Psoas muscle (tissue), 8 donors: ENCODE measurements at regions of chr20 and their contacts with region 1.

Region 1: DNA sequence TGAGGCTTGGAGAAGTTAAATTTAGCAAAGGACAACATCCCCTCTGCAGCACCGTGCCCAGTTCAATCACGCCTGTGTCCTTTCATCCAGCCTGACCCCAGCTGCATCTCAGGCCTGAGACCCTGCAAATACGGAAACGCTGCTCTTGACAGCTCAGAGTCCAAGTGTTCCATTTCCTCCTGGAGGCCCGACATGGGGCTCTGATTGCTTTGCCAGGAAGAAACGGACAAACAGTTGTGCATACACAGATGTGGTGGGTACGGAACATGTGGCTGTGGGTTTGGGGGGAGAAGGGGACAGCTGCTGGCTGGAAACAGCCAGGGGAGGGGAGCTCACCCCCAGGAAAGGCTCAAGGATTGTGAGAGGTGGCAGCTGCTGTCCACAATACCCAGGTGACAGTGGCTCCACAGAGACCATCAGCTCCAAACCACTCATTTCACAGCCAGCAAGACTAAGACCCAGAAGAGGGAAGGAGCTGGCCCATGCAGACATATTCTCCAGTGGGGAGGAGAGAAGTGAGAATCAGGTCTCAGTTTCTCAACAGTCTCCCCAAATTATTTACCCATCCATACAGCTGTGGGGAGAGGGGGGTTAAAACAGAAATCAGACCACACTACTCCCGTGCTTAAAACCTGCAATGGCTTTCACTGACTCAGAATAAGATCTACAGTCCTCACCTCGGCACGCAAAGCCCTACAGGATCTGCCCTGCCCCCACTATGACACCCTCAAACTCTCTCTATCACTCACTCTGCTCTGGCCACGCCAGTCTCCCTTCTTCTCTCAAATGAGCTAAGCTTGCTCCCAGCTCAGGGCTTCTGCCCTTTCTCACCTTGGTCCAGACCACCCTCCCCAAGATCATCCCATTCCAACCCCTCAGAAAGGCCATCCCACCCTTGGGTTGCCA is 89.1 kb downstream of the PREX1 start:
- DNase-seq: no peak
- ATAC-seq: no peak
- H3K4me3 ChIP-seq: no peak overlapping the region
- H3K27ac ChIP-seq: no peak overlapping the region
- H3K4me1 ChIP-seq: peaks cover 8% of the 10 kb centered on the region
- H3K27me3 ChIP-seq: peaks cover 0 to 1% (median 0%) of the 10 kb centered on the region in 3 donors
- CTCF ChIP-seq: no peak

Region 2: DNA sequence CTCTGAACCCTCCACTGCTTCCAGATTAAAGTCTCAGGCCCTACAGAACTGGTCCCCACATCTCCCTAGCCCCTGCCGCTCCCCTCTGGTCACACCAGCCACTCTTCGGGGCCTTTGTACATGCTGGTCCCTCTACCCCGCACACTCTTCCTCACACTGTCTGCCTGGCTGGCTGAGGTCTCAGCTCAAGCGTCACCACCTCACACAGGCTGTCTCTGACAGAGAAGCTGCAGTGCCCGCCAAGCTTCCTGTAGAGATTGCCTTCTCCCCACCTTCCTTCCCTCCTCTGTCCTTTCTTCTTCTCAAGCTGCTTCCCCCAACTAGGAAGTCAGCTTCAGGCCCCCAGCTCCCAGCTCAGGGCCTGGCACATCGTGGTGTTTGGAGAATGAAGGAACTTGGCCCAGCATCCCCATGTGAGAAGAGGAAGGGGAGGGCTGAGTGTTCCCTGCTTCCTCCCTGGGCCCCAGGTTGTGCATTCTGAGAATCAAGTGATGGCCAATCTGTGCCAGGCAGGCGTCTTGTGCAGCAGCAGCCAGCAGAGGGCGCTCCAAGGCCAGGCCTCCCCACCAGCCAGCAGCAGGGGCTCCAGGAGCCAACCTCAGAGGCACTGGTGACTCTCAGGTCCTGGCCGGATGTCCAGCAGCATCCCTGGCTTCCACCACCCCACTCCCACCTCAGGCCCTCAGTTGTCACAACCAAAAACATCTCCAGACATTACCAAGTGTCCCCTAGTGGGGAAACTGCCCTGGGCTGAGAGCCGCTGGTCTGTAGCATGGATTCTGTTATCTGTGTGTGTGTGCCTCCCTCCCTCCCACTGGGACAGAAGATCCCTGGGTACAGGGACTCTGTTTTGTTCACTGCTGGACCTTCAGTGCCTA is 103.0 kb before region 1 on chr20:
- intact Hi-C with region 1: no loop called
- DNase-seq: peak; percentile 43 to 64
- ATAC-seq: peak in 3 of 4 donors; percentile 55 to 68 (median 65)
- H3K4me3 ChIP-seq: no peak overlapping the region
- H3K27ac ChIP-seq: no peak overlapping the region
- H3K4me1 ChIP-seq: no peaks in the 10 kb centered on the region
- H3K27me3 ChIP-seq: no peaks in the 10 kb centered on the region
- CTCF ChIP-seq: peak; percentile 60

Region 3: GRCh38 chr20:48772362-48773015 is 33.8 kb after region 1 on chr20:
- intact Hi-C with region 1: loop called in 1 of 2 experiments (anchors 5 kb)
- DNase-seq: peak; percentile 46 to 70
- ATAC-seq: peak in 1 of 4 donors; percentile 18
- H3K4me3 ChIP-seq: no peak overlapping the region
- H3K27ac ChIP-seq: no peak overlapping the region
- H3K4me1 ChIP-seq: no peaks in the 10 kb centered on the region
- H3K27me3 ChIP-seq: no peaks in the 10 kb centered on the region
- CTCF ChIP-seq: no peak